ENCODE measurements at regions of chr1 and their contacts with region 1.

Region 1: GRCh38 chr1:173476664-173477285 is 360 bp upstream of the PRDX6 start:
- DNase-seq: peak; percentile 87 to 90
- H3K4me3 ChIP-seq: peak overlapping the region; percentile 99
- H3K27ac ChIP-seq: peak overlapping the region; percentile 74
- H3K4me1 ChIP-seq: peaks cover 50% of the 10 kb centered on the region
- H3K27me3 ChIP-seq: no peaks in the 10 kb centered on the region
- CTCF ChIP-seq: 0 out of 2 replicates have a peak, but pooled peaks have one; percentile 21

Region 2: GRCh38 chr1:173241528-173242347 is 235.0 kb before region 1 on chr1:
- CTCF ChIA-PET with region 1: no interaction called
- POLR2A ChIA-PET with region 1: no interaction called
- intact Hi-C with region 1: no loop called
- DNase-seq: no peak
- H3K4me3 ChIP-seq: no peak overlapping the region
- H3K27ac ChIP-seq: no peak overlapping the region
- H3K4me1 ChIP-seq: no peaks in the 10 kb centered on the region
- H3K27me3 ChIP-seq: no peaks in the 10 kb centered on the region
- CTCF ChIP-seq: no peak

Region 3: GRCh38 chr1:173392895-173393658 is 83.7 kb before region 1 on chr1:
- CTCF ChIA-PET with region 1: no interaction called
- POLR2A ChIA-PET with region 1: no interaction called
- intact Hi-C with region 1: no loop called
- DNase-seq: peak in 1 of 2 experiments; percentile 14
- H3K4me3 ChIP-seq: no peak overlapping the region
- H3K27ac ChIP-seq: no peak overlapping the region
- H3K4me1 ChIP-seq: no peaks in the 10 kb centered on the region
- H3K27me3 ChIP-seq: no peaks in the 10 kb centered on the region
- CTCF ChIP-seq: no peak

Region 4: DNA sequence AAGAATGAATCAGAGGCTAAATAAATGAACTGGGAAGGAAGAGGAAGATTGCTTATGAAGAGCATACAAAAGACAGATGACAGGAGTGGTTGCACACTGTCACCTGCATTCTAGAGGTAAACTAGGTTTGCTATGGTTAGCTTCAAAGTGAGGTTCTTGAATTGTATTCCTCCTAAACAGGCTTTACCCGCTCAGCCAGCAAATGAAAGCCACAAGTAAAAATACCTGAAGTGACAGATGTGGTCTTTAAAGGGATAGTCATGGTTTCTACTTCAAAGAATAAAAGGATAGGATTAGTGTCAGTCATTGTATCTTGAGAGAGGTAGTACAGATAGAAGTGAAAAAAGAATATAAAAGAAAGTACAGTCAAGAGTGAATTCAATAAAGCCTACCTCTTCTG is 32.0 kb before region 1 on chr1:
- CTCF ChIA-PET with region 1: no interaction called
- POLR2A ChIA-PET with region 1: interaction called, 13 read pairs
- intact Hi-C with region 1: no loop called
- DNase-seq: no peak
- H3K4me3 ChIP-seq: no peak overlapping the region
- H3K27ac ChIP-seq: no peak overlapping the region
- H3K4me1 ChIP-seq: no peaks in the 10 kb centered on the region
- H3K27me3 ChIP-seq: no peaks in the 10 kb centered on the region
- CTCF ChIP-seq: no peak

Region 5: GRCh38 chr1:173507205-173507846 is 30.6 kb after region 1 on chr1:
- CTCF ChIA-PET with region 1: no interaction called
- POLR2A ChIA-PET with region 1: interaction called, 12 read pairs
- intact Hi-C with region 1: no loop called
- DNase-seq: peak; percentile 49 to 92
- H3K4me3 ChIP-seq: peak overlapping the region; percentile 25; the same call in 1 of the 2 replicates
- H3K27ac ChIP-seq: peak overlapping the region; percentile 84
- H3K4me1 ChIP-seq: peaks cover 38% of the 10 kb centered on the region
- H3K27me3 ChIP-seq: no peaks in the 10 kb centered on the region
- CTCF ChIP-seq: no peak

Region 6: GRCh38 chr1:173714759-173715537 is 238.2 kb after region 1 on chr1 and contains the start of gene KLHL20:
- CTCF ChIA-PET with region 1: no interaction called
- POLR2A ChIA-PET with region 1: no interaction called
- intact Hi-C with region 1: loop called (anchors 1 kb)
- DNase-seq: peak; percentile 85 to 89
- H3K4me3 ChIP-seq: peak within 1 kb of the TSS; percentile 67
- H3K27ac ChIP-seq: peak within 1 kb of the TSS; percentile 56
- H3K4me1 ChIP-seq: peaks cover 28% of the 10 kb centered on the region
- H3K27me3 ChIP-seq: no peaks in the 10 kb centered on the region
- CTCF ChIP-seq: no peak
- total RNA-seq, gene KLHL20: 11.5 and 15.3 TPM in 2 replicates

Region 7: GRCh38 chr1:173824331-173825081 is 347.7 kb after region 1 on chr1 and contains the starts of genes CENPL and DARS2:
- CTCF ChIA-PET with region 1: no interaction called
- POLR2A ChIA-PET with region 1: no interaction called
- intact Hi-C with region 1: loop called (anchors 1 kb)
- DNase-seq: peak; percentile 86 to 90
- H3K4me3 ChIP-seq: peak within 1 kb of the TSS; percentile 84
- H3K27ac ChIP-seq: peak within 1 kb of the TSS; percentile 95
- H3K4me1 ChIP-seq: peaks cover 17% of the 10 kb centered on the region
- H3K27me3 ChIP-seq: no peaks in the 10 kb centered on the region
- CTCF ChIP-seq: no peak
- total RNA-seq, gene CENPL: 14.4 and 19.5 TPM in 2 replicates
- total RNA-seq, gene DARS2: 15.0 and 18.3 TPM in 2 replicates

Region 8: DNA sequence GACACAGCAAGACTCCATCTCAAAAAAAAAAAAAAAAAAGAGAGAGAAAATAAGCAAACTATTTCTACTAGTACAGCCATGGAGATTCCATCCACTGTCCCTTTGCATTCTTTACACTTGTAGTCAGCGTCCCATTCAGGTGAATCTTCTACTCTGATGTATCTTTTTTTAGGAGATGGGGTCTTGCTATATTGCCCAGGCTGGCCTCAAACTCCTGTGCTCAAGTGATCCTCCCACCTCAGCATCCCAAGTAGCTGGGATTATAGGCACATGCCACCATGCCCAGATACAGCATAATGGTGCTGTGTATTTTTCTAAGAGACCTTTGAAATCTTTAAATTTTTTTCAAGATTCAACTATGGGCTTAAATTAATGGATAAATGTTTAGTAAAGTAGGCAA is 356.0 kb after region 1 on chr1:
- CTCF ChIA-PET with region 1: interaction called, 12 read pairs
- POLR2A ChIA-PET with region 1: no interaction called
- intact Hi-C with region 1: no loop called
- DNase-seq: no peak
- H3K4me3 ChIP-seq: no peak overlapping the region
- H3K27ac ChIP-seq: no peak overlapping the region
- H3K4me1 ChIP-seq: no peaks in the 10 kb centered on the region
- H3K27me3 ChIP-seq: no peaks in the 10 kb centered on the region
- CTCF ChIP-seq: no peak

Region 9: DNA sequence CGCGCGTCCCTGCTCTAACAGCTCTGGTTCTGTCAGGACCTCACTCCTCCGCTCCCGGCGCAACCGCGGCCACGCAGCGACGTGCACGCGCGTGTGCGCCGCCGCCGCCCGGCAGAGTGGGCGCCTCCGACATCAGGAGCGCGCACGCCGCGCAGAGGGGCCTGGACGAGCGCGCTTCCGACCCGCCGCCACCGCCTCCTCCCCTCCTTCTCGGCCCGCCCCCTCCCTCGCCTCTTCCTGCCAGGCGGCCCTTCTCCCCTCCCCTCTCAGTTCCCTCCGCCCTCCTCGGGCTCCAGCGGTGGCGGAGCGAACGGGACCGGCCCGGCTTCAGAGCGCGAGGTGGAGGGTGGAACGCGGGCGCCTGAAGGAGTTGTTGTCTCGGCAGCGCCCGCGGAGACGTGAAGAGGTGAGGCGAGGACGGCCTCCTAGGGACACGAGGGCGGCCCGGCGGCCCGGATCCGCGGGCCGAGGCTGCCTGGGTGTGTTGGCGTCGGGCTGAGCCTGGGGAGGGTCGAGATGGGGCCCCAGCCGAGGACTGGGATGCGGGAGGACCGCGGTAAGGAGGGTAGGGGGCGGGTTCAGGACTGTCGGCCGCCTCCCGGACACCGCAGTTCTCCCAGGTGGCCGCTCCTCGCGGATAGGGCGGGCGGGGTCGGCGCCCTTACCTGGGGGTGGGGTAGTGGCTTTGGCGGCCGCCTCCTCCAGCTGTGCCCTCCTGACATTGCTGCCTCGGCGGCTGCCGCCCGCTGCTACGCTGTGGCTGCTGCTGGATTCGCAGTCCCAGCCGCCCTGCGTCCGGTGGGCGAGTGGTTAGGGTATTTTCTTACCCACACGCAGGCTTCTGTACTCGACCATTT is 682.7 kb after region 1 on chr1 and contains the start of gene RABGAP1L:
- CTCF ChIA-PET with region 1: no interaction called
- POLR2A ChIA-PET with region 1: no interaction called
- intact Hi-C with region 1: loop called (anchors 5 kb)
- DNase-seq: peak; percentile 70 to 92
- H3K4me3 ChIP-seq: peak within 1 kb of the TSS; percentile 81
- H3K27ac ChIP-seq: peak within 1 kb of the TSS; percentile 18; the same call in 1 of the 2 replicates
- H3K4me1 ChIP-seq: peaks cover 17% of the 10 kb centered on the region
- H3K27me3 ChIP-seq: no peaks in the 10 kb centered on the region
- CTCF ChIP-seq: no peak
- total RNA-seq, gene RABGAP1L: 56.7 and 57.4 TPM in 2 replicates

Measured in PC-9 (cell line).